Gastrocnemius medialis (tissue), 4 donors: ENCODE measurements at regions of chr15 and their contacts with region 1.

Region 1: DNA sequence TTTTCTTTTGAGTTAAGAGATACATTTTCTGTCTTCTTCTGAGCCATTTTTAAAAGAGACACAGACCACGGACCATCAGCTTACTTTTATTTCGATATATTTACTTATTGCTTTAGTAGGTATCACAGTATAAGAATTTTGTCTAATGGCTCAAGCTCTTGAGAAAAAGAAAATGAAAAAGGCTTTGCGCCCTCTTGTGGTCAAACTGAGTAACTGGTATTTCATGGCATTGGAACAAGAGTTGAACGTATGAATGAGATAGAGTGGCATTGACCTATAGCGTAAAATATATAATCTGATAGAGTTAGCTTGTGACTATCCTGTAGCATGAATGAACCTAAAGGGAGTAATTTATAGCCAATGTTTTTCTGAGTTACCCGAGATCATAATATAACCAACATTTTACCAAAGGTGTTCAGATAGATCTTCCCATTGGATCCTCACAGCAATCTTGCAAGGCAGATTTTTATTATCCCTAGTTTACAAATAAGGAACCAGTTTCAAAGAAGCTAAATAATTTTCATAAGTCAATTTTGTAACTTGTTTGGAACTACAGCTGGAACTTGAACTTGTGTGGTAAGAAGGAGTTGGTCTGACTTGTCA is 154.6 kb downstream of the POLR2M start:
- DNase-seq: no peak
- ATAC-seq: peak in 1 of 2 donors; percentile 29
- H3K4me3 ChIP-seq: no peak overlapping the region
- H3K27ac ChIP-seq: no peak overlapping the region
- H3K4me1 ChIP-seq: no peaks in the 10 kb centered on the region
- H3K27me3 ChIP-seq: no peaks in the 10 kb centered on the region
- CTCF ChIP-seq: peak; percentile 61 to 82 (median 81)
- POLR2A ChIP-seq: no peak

Region 2: DNA sequence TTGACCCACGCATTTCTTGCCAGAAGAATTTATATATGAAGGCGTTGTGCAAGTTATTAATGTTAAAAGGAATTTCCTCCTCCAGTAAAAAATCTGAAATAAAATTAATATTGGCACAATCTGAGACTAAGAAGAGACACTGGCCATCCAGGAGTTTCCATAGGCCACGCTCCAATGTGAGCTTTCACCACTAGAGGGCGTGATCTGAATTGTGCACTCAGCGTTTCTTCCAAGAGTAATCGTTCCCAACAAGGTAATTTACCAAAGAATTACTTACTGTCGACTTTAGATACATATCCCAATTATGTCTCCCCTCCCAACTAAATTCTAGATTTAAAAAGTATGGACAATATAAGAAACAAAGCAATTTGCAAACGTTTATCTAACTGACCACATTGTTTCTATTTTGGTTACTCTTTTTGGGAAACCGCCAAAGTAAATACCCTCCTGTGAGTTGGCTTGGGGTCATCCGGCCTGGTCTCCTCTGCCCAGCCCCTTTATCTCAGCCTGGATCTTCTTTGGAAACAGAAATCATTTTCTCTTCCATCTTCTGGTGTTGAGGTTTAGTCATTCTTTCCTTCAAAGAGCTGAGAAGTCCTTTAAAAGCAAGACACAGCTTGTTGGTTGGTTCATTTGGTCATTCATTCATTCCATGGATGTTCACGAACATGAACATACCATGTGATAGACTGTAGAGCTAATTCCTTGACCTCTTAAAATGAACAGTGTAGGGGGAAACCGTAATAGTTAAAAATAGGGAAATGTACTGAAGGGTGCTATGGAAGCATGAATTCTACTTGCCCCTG is 128.4 kb before region 1 on chr15:
- in situ Hi-C with region 1: loop called in 1 of 4 experiments (anchors 5 kb)
- intact Hi-C with region 1: no loop called
- DNase-seq: peak in 1 of 2 donors; percentile 21
- ATAC-seq: peak in 1 of 2 donors; percentile 42
- H3K4me3 ChIP-seq: no peak overlapping the region
- H3K27ac ChIP-seq: no peak overlapping the region
- H3K4me1 ChIP-seq: peaks cover 3 to 4% of the 10 kb centered on the region in 2 donors
- H3K27me3 ChIP-seq: no peaks in the 10 kb centered on the region
- CTCF ChIP-seq: peak; percentile 58 to 87 (median 65)
- POLR2A ChIP-seq: no peak

Region 3: GRCh38 chr15:57751177-57751800 is 109.8 kb before region 1 on chr15:
- in situ Hi-C with region 1: loop called in 1 of 4 experiments (anchors 5 kb)
- intact Hi-C with region 1: loop called (anchors 5 kb)
- DNase-seq: no peak
- ATAC-seq: no peak
- H3K4me3 ChIP-seq: no peak overlapping the region
- H3K27ac ChIP-seq: no peak overlapping the region
- H3K4me1 ChIP-seq: no peaks in the 10 kb centered on the region
- H3K27me3 ChIP-seq: no peaks in the 10 kb centered on the region
- CTCF ChIP-seq: peak in 1 of 5 experiments; percentile 17
- POLR2A ChIP-seq: no peak